ENCODE measurements at regions of chr2 and their contacts with region 1.

Region 1: DNA sequence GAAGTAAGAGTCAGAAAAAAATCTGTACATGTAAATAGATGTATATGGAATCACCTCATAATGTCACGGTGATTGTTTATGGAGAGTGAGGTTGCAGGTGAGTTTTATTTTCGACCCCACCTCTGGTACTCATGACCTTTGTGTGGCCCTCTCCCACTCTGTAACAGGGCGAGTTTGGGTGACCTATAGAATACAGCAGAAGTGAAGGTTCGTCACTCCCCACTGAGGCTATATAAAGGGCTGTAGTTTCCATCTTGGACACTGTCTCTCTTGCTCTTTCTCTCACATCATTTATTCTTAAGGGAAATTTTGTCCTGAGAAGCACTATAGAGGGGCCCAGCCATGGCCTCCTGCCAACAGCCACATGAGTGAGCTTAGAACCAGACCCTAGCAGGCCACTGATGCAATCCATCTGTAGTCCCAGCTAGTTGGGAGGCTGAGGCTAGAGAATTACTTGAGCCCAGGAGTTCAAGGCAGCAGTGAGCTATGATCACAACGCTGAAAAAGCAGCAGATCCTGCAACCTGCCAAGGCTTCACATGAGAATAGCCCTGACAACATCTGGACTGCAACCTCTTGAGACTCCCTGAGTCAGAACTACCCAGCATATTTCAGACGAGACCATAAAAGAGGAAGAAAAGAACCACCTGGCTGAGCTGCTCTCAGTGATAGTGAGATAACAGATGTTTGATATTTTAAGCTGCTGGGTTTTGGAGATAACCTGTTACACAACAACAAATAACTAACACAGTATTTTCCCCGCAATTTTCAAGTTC is 74.3 kb upstream of the SLC1A4 start:
- DNase-seq: no peak
- ATAC-seq: peak; percentile 73
- H3K4me3 Mint-ChIP-seq: peak overlapping the region; percentile 71
- H3K27ac Mint-ChIP-seq: peak overlapping the region; percentile 94
- H3K4me1 Mint-ChIP-seq: peaks cover 68% of the 10 kb centered on the region
- H3K27me3 Mint-ChIP-seq: no peaks in the 10 kb centered on the region
- CTCF ChIP-seq: no peak

Region 2: DNA sequence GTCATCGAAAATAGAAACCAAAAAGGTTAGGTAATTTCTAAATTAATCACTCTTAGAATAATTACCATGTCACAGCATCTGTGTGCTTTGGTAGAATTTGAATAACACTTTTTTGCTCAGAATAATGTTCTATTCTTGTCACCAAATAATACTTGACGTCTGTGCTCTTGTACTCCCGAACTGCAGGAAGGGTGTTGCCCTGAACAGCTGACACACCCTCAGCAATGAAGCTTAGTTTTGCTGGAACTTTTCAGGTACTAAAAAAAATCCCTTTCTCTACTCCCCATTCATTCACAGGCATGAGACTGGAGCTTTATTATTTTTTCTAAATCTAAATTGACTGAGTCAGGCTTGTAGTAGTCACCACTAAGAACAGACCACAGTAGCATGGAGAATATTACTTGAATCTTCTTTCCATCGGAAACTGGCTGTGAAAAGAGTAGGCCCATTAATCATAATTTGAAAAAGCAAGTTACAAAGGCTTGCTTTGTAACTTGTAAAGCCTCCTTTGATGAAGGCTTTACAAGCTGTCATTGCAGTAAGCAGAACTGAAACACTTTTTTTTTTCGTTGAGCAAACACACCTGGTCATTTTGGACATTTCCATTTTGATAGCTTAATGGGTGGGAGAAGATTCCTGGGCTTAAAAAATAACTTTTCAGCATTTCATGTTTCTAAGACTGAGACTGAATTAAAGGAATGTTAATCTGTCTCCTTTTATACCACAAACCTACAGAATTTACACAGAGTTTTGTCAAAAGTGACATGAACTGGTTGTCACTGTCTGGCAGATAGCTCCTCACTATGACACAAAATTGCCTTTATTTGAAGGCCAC is 700.4 kb before region 1 on chr2:
- CTCF ChIA-PET with region 1: no interaction called
- POLR2A ChIA-PET with region 1: no interaction called
- intact Hi-C with region 1: loop called (anchors 10 kb)
- DNase-seq: no peak
- ATAC-seq: peak; percentile 64
- H3K4me3 Mint-ChIP-seq: peak overlapping the region; percentile 75
- H3K27ac Mint-ChIP-seq: peak overlapping the region; percentile 99
- H3K4me1 Mint-ChIP-seq: peaks cover 76% of the 10 kb centered on the region
- H3K27me3 Mint-ChIP-seq: no peaks in the 10 kb centered on the region
- CTCF ChIP-seq: no peak

Region 3: GRCh38 chr2:64695721-64696261 is 219.1 kb before region 1 on chr2:
- CTCF ChIA-PET with region 1: no interaction called
- POLR2A ChIA-PET with region 1: no interaction called
- intact Hi-C with region 1: no loop called
- DNase-seq: no peak
- ATAC-seq: no peak
- H3K4me3 Mint-ChIP-seq: no peak overlapping the region
- H3K27ac Mint-ChIP-seq: peak overlapping the region; percentile 36
- H3K4me1 Mint-ChIP-seq: peaks cover 48% of the 10 kb centered on the region
- H3K27me3 Mint-ChIP-seq: no peaks in the 10 kb centered on the region
- CTCF ChIP-seq: no peak

Region 4: GRCh38 chr2:64730551-64731262 is 184.2 kb before region 1 on chr2:
- CTCF ChIA-PET with region 1: no interaction called
- POLR2A ChIA-PET with region 1: no interaction called
- intact Hi-C with region 1: loop called (anchors 5 kb)
- DNase-seq: peak; percentile 24
- ATAC-seq: peak; percentile 45
- H3K4me3 Mint-ChIP-seq: peak overlapping the region; percentile 84
- H3K27ac Mint-ChIP-seq: peak overlapping the region; percentile 91
- H3K4me1 Mint-ChIP-seq: peaks cover 66% of the 10 kb centered on the region
- H3K27me3 Mint-ChIP-seq: no peaks in the 10 kb centered on the region
- CTCF ChIP-seq: no peak

Region 5: DNA sequence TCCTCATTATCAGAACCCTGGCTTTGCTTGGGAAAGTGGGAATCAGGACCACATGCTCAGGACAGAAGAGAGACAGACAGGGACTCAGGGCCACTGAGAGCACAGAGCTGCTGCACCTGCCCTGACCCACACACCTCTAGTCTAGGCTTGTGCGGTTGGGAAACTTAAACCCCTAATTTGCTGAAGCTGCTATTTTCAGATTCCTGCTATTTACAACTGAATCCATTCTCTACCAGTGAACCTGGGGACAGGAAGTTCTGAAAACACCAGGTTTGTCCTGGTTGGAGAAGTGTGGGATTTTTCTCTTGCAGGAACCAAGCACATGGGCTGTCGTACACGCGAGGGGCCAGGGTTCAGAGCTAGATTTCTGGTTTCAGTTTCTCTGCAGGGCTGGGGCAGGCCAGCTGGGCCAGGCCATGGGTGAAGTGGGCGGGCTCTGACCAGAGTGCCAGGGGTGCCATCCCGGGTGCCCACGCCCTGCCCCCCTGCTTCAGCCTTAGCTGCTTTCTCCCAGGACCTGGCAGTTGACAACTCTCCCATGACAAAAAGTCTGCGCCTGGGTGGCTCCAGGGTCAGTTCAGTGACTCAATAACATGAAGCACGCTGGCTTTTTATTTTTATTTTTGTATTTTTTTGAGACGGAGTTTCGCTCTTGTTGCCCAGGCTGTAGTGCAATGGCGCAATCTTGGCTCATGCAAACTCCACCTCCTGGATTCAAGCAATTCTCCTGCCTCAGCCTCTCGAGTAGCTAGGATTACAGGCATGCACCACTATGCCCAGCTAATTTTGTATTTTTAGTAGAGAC is 23.0 kb after region 1 on chr2:
- CTCF ChIA-PET with region 1: interaction called, 45 read pairs
- POLR2A ChIA-PET with region 1: interaction called, 50 read pairs
- intact Hi-C with region 1: loop called (anchors 1 kb)
- DNase-seq: peak; percentile 46
- ATAC-seq: peak; percentile 69
- H3K4me3 Mint-ChIP-seq: peak overlapping the region; percentile 62
- H3K27ac Mint-ChIP-seq: peak overlapping the region; percentile 91
- H3K4me1 Mint-ChIP-seq: peaks cover 92% of the 10 kb centered on the region
- H3K27me3 Mint-ChIP-seq: no peaks in the 10 kb centered on the region
- CTCF ChIP-seq: no peak

Region 6: GRCh38 chr2:65017335-65017734 is 102.4 kb after region 1 on chr2:
- CTCF ChIA-PET with region 1: interaction called, 18 read pairs
- POLR2A ChIA-PET with region 1: interaction called, 14 read pairs
- intact Hi-C with region 1: loop called (anchors 1 kb)
- DNase-seq: no peak
- ATAC-seq: peak; percentile 78
- H3K4me3 Mint-ChIP-seq: peak overlapping the region; percentile 55
- H3K27ac Mint-ChIP-seq: peak overlapping the region; percentile 71
- H3K4me1 Mint-ChIP-seq: peaks cover 44% of the 10 kb centered on the region
- H3K27me3 Mint-ChIP-seq: no peaks in the 10 kb centered on the region
- CTCF ChIP-seq: no peak

Region 7: DNA sequence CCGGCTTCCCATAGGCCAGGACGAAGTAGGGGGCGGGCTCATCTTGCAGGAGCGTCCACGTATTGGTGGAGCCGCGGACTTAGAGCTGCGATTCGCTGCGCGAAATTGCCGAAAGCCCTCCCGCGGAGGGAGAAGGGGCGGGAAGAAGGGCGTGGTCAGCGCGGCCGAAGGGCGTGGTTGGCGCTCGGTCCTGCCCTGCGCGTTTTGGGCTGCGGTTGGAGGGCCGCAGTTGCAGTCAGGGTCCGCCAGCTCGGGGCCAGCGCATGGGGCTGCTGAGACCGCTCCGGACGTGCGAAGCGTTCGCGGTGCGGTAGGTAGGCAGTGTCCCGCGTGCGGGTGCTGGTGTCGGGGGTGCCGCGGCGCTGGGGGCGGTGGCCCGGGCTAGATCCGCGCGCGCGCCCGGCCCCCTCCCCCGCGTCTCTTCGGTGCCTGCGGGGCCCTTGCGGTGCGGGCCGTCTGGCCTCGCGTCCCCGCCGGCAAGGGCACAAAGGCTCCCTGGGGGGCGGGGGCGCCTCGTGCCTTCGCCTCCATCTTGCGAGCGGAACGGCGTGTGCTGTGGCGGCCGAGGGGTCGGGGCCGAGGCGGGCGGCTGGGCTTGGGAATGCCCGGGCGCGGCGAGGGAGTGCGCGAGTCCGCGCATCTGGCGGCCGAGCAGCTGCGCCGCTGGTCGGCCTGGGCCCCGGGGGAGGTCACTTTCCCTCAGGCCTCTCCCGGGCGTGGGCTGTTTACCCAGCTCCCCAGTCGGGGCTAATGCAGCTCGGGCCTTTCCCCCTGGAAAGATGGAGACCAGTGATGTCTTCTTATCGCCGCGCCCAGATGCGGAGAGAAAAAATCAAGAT is 141.5 kb after region 1 on chr2 and contains the start of gene CEP68:
- CTCF ChIA-PET with region 1: interaction called, 8 read pairs
- POLR2A ChIA-PET with region 1: interaction called, 30 read pairs
- intact Hi-C with region 1: no loop called
- DNase-seq: peak; percentile 95
- ATAC-seq: peak; percentile 91
- H3K4me3 Mint-ChIP-seq: peak within 1 kb of the TSS; percentile 97
- H3K27ac Mint-ChIP-seq: peak within 1 kb of the TSS; percentile 95
- H3K4me1 Mint-ChIP-seq: peaks cover 75% of the 10 kb centered on the region
- H3K27me3 Mint-ChIP-seq: no peaks in the 10 kb centered on the region
- CTCF ChIP-seq: no peak
- total RNA-seq, gene CEP68: 16.6 and 17.9 TPM in 2 replicates

Region 8: GRCh38 chr2:65227425-65228262 is 312.7 kb after region 1 on chr2 and contains the start of gene ACTR2:
- CTCF ChIA-PET with region 1: no interaction called
- POLR2A ChIA-PET with region 1: interaction called, 5 read pairs
- intact Hi-C with region 1: loop called (anchors 5 kb)
- DNase-seq: peak; percentile 88
- ATAC-seq: peak; percentile 90
- H3K4me3 Mint-ChIP-seq: peak within 1 kb of the TSS; percentile 99
- H3K27ac Mint-ChIP-seq: peak within 1 kb of the TSS; percentile 100
- H3K4me1 Mint-ChIP-seq: peaks cover 45% of the 10 kb centered on the region
- H3K27me3 Mint-ChIP-seq: no peaks in the 10 kb centered on the region
- CTCF ChIP-seq: no peak
- total RNA-seq, gene ACTR2: 484 and 493 TPM in 2 replicates

Region 9: DNA sequence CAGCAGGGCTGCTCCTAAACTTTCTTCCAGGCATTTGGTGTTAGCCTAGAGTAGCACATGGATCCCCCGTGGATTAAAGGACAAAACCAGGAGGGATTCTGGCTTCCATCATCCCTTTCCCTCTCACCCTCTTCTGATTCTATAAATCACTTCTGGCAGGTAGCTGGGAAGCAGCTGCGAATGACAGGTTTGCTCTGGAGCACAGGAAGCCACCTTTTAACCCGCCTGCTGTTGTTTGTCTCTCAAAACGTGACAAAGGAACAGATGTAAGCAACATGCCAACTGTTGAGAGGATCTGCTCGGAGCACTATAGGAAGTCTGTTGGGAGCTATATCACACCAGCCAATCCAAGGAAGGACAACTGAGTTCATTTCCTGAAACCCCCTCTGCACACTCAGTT is 414.6 kb after region 1 on chr2:
- CTCF ChIA-PET with region 1: no interaction called
- POLR2A ChIA-PET with region 1: no interaction called
- intact Hi-C with region 1: no loop called
- DNase-seq: no peak
- ATAC-seq: no peak
- H3K4me3 Mint-ChIP-seq: no peak overlapping the region
- H3K27ac Mint-ChIP-seq: no peak overlapping the region
- H3K4me1 Mint-ChIP-seq: no peaks in the 10 kb centered on the region
- H3K27me3 Mint-ChIP-seq: peaks cover 4% of the 10 kb centered on the region
- CTCF ChIP-seq: no peak

Measured in activated B cell treated with CpG ODN at 0.5 μM for 24 hours (primary cell).